ENCODE measurements at regions of chr3 and their contacts with region 1.

Region 1: GRCh38 chr3:184298759-184299496 is at the start of gene PSMD2:
- DNase-seq: peak; percentile 96
- ATAC-seq: peak; percentile 96
- H3K4me3 Mint-ChIP-seq: peak within 1 kb of the TSS; percentile 95
- H3K27ac Mint-ChIP-seq: peak within 1 kb of the TSS; percentile 88
- H3K4me1 Mint-ChIP-seq: peaks cover 23% of the 10 kb centered on the region
- H3K27me3 Mint-ChIP-seq: no peaks in the 10 kb centered on the region
- CTCF ChIP-seq: no peak
- total RNA-seq, gene PSMD2: 206 and 210 TPM in 2 replicates

Region 2: GRCh38 chr3:183884427-183885296 is 414.3 kb before region 1 on chr3 and contains the start of gene PARL:
- CTCF ChIA-PET with region 1: interaction called, 3 read pairs
- POLR2A ChIA-PET with region 1: no interaction called
- intact Hi-C with region 1: loop called (anchors 1 kb)
- DNase-seq: peak; percentile 94
- ATAC-seq: peak; percentile 99
- H3K4me3 Mint-ChIP-seq: peak within 1 kb of the TSS; percentile 98
- H3K27ac Mint-ChIP-seq: peak within 1 kb of the TSS; percentile 85
- H3K4me1 Mint-ChIP-seq: peaks cover 36% of the 10 kb centered on the region
- H3K27me3 Mint-ChIP-seq: peaks cover 2% of the 10 kb centered on the region
- CTCF ChIP-seq: no peak
- total RNA-seq, gene PARL: 57.6 and 57.8 TPM in 2 replicates

Region 3: DNA sequence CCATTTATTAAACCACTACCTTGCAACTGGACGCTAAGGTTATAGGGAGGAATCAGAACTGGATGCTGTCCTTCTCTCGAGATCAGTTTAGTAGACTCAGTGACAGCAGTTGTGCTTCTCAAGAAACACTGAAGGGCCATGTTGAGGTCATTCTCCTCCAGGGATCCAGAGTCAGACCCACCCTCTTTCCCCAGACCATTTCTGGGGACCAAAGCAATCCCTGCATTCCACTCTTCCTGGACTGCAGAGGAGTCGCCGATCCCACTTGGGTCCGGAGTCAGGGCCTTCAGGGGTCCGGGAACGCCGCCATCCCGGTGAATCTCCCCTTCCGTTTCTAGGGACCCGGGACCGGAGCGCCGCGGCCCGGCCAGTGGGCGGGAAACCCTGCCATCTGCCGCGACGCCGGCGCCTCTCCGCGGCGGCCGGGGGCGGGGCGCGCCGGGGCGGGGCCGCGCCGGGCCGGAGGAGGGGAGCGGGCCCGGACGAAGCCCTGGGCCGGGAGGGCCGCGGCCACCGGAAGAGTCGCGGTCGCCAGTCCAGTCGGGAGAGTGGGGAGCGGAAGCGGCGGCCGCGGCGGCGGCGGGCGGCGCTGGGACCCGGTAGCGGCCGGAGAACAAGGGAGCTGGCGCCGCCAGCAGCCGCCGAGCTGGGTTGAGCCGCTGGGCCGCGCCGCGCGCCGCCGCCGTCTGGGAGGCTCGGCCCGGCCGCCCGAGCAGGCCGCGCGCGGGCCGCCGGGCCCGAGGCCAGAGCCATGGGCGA is 143.9 kb before region 1 on chr3 and contains the start of gene DVL3:
- CTCF ChIA-PET with region 1: no interaction called
- POLR2A ChIA-PET with region 1: no interaction called
- intact Hi-C with region 1: loop called (anchors 1 kb)
- DNase-seq: peak; percentile 70
- ATAC-seq: peak; percentile 80
- H3K4me3 Mint-ChIP-seq: peak within 1 kb of the TSS; percentile 91
- H3K27ac Mint-ChIP-seq: peak within 1 kb of the TSS; percentile 77
- H3K4me1 Mint-ChIP-seq: peaks cover 25% of the 10 kb centered on the region
- H3K27me3 Mint-ChIP-seq: no peaks in the 10 kb centered on the region
- CTCF ChIP-seq: no peak
- total RNA-seq, gene DVL3: 52.1 and 54.2 TPM in 2 replicates

Region 4: DNA sequence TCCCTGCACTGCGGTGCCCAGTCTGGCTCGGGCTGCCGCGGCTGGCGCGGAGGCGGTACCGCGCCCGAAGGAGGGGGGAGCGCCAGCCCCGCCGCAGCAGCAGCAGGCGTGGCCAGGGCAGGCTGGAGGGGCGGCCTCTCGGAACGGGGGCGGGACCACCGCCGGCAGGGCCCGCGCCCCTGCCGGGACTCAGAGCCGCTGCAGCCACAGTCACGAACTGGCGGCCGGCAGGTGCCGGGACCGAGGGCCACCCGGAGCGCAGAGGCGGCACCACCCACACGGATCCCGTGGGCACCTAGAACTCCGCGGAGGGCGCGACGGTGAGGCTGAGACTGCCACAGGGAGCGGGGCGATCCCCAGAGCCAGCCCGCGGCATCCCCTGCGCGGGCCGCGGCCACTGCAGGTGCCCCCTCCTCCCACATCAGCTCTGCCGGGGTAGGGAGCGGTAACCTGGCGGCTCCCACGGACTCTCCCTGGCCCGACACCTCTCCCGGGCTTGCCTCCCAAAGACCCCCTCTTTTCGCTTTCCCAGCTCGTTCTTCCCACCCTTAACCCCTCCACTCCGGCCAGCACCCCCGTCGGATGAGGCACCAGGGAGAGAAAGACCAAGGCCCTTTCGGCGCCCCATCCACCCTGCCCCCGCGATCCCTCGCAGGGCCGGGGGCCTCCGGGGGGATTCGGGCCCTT is 69.4 kb before region 1 on chr3 and contains the start of gene VWA5B2:
- CTCF ChIA-PET with region 1: no interaction called
- POLR2A ChIA-PET with region 1: no interaction called
- intact Hi-C with region 1: loop called (anchors 2 kb)
- DNase-seq: peak; percentile 79
- ATAC-seq: peak; percentile 97
- H3K4me3 Mint-ChIP-seq: peak within 1 kb of the TSS; percentile 77
- H3K27ac Mint-ChIP-seq: no peak within 1 kb of the TSS
- H3K4me1 Mint-ChIP-seq: peaks cover 15% of the 10 kb centered on the region
- H3K27me3 Mint-ChIP-seq: peaks cover 45% of the 10 kb centered on the region
- CTCF ChIP-seq: no peak
- total RNA-seq, gene VWA5B2: 0.42 and 0.76 TPM in 2 replicates

Region 5: GRCh38 chr3:184335661-184336546 is 37.0 kb after region 1 on chr3:
- CTCF ChIA-PET with region 1: no interaction called
- POLR2A ChIA-PET with region 1: interaction called, 3 read pairs
- intact Hi-C with region 1: loop called (anchors 1 kb)
- DNase-seq: peak; percentile 92
- ATAC-seq: peak; percentile 79
- H3K4me3 Mint-ChIP-seq: peak overlapping the region; percentile 84
- H3K27ac Mint-ChIP-seq: peak overlapping the region; percentile 85
- H3K4me1 Mint-ChIP-seq: peaks cover 33% of the 10 kb centered on the region
- H3K27me3 Mint-ChIP-seq: peaks cover 5% of the 10 kb centered on the region
- CTCF ChIP-seq: no peak

Region 6: DNA sequence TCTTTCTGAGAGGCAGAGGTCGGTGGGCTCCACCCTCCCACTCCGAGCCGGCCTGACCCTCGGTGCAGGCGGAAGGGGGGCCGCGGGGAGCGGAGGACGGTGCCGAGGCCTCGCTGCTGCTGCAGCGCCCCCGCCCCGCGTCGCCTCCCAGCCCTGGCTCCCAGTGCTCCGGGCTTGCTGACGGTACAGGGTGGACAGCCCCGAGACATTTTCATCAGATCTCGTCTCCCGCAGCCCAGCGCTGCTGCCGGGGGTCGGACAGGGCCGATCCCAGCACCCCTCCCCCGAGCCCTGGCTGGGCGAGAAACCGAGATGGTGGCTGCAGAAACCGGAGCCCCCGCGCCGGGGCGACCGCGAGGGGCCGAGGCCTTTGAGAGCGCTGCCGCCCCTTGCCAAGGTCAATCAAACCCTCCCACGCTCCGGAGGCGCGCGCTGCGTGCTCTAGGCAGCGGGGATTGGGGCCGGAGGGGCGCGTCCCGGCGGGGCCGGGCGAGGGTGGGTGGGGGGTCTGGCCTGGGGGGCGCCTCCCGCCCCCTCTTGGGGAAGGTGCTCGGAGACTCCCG is 305.2 kb after region 1 on chr3:
- CTCF ChIA-PET with region 1: no interaction called
- POLR2A ChIA-PET with region 1: no interaction called
- intact Hi-C with region 1: no loop called
- DNase-seq: no peak
- ATAC-seq: no peak
- H3K4me3 Mint-ChIP-seq: peak overlapping the region; percentile 64
- H3K27ac Mint-ChIP-seq: no peak overlapping the region
- H3K4me1 Mint-ChIP-seq: peaks cover 25% of the 10 kb centered on the region
- H3K27me3 Mint-ChIP-seq: peaks cover 41% of the 10 kb centered on the region
- CTCF ChIP-seq: no peak

Region 7: DNA sequence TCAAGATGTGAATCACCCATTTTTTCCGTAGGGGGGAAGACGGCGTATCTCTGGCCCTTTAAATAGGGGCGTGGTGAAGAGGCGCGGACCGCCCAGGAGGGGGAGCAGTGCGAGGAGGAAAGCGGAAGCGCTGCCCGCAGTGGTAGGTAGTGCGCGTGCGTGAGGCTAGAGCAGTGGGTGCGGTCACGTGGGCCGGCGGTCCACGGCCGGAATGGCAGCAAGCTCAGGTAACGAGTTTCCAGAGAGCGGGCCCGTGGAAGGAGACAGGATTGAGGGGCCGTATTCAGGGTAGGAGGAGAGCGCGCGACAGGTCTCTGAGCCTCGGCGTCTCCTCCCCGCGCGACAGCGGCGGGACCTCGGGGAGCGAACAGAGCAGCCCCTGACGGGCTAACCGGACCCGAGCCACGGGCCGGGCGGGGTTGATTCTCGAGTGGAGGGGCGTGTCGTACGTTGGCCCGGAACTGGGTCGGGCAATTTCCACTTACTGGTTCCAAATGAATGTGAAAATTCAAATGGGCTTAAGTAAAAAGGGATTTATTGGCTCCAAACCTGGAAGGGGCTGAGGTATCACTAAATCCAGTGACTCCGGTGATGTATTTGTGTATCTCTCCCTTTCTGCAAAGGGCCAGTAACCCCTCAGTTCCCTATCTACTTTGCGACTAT is 513.2 kb after region 1 on chr3 and contains the start of gene VPS8:
- CTCF ChIA-PET with region 1: no interaction called
- POLR2A ChIA-PET with region 1: no interaction called
- intact Hi-C with region 1: loop called (anchors 1 kb)
- DNase-seq: peak; percentile 95
- ATAC-seq: peak; percentile 92
- H3K4me3 Mint-ChIP-seq: peak within 1 kb of the TSS; percentile 96
- H3K27ac Mint-ChIP-seq: peak within 1 kb of the TSS; percentile 96
- H3K4me1 Mint-ChIP-seq: peaks cover 24% of the 10 kb centered on the region
- H3K27me3 Mint-ChIP-seq: no peaks in the 10 kb centered on the region
- CTCF ChIP-seq: no peak
- total RNA-seq, gene VPS8: 57.4 and 68.8 TPM in 2 replicates